ENCODE measurements at regions of chr3 and their contacts with region 1.

Region 1: GRCh38 chr3:22175947-22176346 is 424.9 kb upstream of the ZNF385D start:
- DNase-seq: no peak
- H3K4me3 ChIP-seq: no peak overlapping the region
- H3K27ac ChIP-seq: no peak overlapping the region
- H3K4me1 ChIP-seq: no peaks in the 10 kb centered on the region
- H3K27me3 ChIP-seq: no peaks in the 10 kb centered on the region
- CTCF ChIP-seq: peak in 1 of 4 experiments; percentile 7
- POLR2A ChIP-seq: no peak

Region 2: DNA sequence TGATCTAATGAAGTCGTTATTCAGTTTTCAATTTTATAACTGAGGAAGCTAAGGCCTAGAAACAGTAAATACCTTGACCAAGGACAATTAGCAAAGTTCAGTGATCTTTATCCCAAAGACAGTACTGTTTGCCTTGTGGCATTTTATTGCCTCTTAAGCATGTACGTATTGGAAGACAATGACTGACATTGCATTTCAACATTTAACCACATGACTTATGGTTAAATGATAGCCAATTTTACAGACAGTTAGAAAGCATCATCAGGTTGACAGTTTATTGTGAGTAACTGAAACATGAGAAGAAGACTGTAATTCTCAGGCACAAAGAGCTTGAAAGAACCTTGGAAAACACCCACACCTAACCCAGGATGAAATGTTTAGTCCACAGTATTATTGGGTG is 34.2 kb before region 1 on chr3:
- intact Hi-C with region 1: no loop called
- DNase-seq: no peak
- H3K4me3 ChIP-seq: no peak overlapping the region
- H3K27ac ChIP-seq: no peak overlapping the region
- H3K4me1 ChIP-seq: no peaks in the 10 kb centered on the region
- H3K27me3 ChIP-seq: no peaks in the 10 kb centered on the region
- CTCF ChIP-seq: no peak
- POLR2A ChIP-seq: no peak

Region 3: GRCh38 chr3:22908989-22909507 is 733.1 kb after region 1 on chr3:
- intact Hi-C with region 1: loop called (anchors 10 kb)
- DNase-seq: no peak
- H3K4me3 ChIP-seq: no peak overlapping the region
- H3K27ac ChIP-seq: no peak overlapping the region
- H3K4me1 ChIP-seq: no peaks in the 10 kb centered on the region
- H3K27me3 ChIP-seq: no peaks in the 10 kb centered on the region
- CTCF ChIP-seq: peak in 1 of 4 experiments; percentile 31
- POLR2A ChIP-seq: no peak

Region 4: DNA sequence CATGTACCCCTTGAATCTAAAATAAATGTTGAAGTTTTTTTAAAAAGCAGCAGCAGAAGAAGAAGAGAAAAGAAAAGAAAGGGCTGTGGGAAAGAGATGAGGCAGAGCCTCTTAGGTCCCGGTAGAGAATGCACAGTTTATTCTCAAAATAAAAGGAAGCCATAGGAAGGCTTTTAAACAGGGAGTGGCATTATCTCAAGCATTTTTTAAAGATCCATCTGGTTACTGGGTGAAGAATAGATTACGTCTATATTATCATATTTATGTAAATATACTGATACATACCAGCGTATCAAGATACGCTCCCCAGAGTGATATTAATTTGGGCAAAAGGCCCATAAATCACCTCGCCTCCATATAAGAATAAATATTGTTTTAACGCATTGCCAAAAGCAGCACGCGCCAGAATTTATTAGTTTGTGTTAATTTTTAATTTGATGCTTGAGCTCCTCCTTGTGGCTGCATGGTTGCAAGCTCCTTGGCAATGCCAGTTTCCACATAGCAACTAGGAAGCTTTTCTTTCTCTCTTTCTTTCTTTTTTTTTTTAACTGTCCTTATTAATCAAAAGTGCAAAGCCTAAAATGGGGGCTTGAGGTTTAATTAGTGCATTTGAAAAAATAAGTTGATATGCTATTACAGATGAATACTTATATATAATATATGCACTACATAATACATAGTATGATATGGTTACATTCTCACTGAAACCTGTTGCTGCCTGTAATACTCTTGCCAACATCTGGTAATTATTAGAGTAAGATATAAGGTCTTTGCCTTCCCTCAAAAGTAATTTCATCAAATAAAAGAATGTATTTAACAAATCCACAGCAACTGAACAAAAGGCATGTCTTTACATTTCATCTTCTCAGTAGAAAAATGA is 784.4 kb after region 1 on chr3:
- intact Hi-C with region 1: loop called (anchors 5 kb)
- DNase-seq: peak; percentile 57
- H3K4me3 ChIP-seq: no peak overlapping the region
- H3K27ac ChIP-seq: no peak overlapping the region
- H3K4me1 ChIP-seq: no peaks in the 10 kb centered on the region
- H3K27me3 ChIP-seq: no peaks in the 10 kb centered on the region
- CTCF ChIP-seq: peak; percentile 60 to 78 (median 68)
- POLR2A ChIP-seq: no peak